K562 (cell line): ENCODE measurements at regions of chr7 and their contacts with region 1.

Region 1: GRCh38 chr7:158834878-158835784 is 5.8 kb upstream of the ESYT2 start:
- DNase-seq: peak; percentile 52 to 92 (median 62)
- ATAC-seq: peak; percentile 46
- H3K4me3 ChIP-seq: no peak overlapping the region
- H3K27ac ChIP-seq: peak overlapping the region; percentile 72
- H3K4me1 ChIP-seq: peaks cover 26 to 38% of the 10 kb centered on the region in 2 experiments
- H3K27me3 ChIP-seq: no peaks in the 10 kb centered on the region
- CTCF ChIP-seq: no peak
- EP300 ChIP-seq: peak; percentile 73; the same call in 1 of the 2 replicates
- POLR2A ChIP-seq: no peak
- RAD21 ChIP-seq: peak in 1 of 2 experiments; percentile 16; a peak in 1 of 4 replicates

Region 2: DNA sequence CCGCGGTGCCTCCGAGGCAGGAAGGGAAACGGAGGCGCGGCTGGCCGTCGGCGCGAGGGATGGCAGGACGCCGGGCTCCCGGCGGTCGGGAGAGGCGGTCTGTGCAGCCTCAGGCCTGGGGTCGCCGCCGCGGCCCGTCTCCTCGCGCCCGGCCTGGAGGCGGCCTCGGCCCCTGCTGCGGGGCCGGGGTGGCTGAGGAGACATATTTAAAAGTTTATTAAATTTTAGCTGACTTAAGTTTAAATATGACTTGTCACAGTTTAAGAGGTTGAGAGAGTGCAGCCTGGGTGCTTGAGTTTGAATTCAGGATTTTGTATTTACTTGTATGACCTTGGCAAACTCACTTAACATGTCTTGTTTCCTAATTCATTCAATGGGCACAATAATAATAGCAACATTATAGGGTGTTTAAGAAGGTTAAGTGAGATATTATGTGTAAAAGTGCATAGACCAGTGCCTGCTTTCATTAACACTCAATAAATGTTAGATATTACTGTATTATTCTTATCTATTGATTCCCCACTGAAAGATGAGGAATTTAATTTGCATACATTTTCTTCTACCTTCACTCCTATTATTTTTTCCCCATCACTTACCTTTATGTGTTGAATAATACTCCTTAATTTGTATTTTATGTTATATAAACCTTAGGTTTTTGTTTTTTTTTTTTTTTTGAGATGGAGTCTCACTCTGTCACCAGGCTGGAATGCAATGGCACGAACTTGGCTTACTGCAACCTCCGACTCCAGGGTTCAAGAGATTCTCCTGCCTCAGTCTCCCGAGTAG is 21.9 kb after region 1 on chr7:
- CTCF ChIA-PET with region 1: no interaction called
- POLR2A ChIA-PET with region 1: interaction called, 10 read pairs
- in situ Hi-C with region 1: no loop called
- intact Hi-C with region 1: loop called (anchors 1 kb)
- DNase-seq: peak in 1 of 4 experiments; percentile 66
- ATAC-seq: peak; percentile 34
- H3K4me3 ChIP-seq: peak overlapping the region; percentile 80
- H3K27ac ChIP-seq: peak overlapping the region; percentile 78
- H3K4me1 ChIP-seq: peaks cover 44 to 49% of the 10 kb centered on the region in 2 experiments
- H3K27me3 ChIP-seq: no peaks in the 10 kb centered on the region
- CTCF ChIP-seq: no peak
- EP300 ChIP-seq: no peak
- POLR2A ChIP-seq: no peak
- RAD21 ChIP-seq: no peak